ENCODE measurements at regions of chr14 and their contacts with region 1.

Region 1: DNA sequence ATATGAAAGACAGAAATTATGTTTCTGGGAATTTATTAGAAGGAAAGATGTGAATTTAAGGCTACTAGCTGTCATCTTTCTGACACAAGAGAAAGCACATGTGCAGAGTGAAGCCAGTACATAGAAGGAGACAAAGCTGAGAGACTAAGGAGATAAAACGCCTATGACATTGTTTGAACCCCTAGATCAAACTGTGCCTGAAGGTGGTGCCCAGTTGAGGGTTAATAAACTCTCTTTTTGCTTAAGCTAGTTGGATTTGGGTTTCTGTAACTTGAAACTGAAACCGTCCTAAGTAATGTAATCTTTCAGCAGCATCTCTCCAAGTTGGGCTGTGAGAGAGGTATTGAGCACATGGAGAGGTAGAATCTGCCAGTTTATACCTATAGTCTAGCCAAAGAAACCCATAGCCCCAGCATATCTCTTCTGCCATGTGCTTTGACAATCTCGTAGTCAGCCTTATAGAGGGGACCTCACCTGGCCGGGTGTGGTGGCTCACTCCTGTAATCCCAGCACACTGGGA is 84.2 kb downstream of the LRRC74A start:
- DNase-seq: no peak
- ATAC-seq: no peak
- H3K4me3 Mint-ChIP-seq: no peak overlapping the region
- H3K27ac Mint-ChIP-seq: no peak overlapping the region
- H3K4me1 Mint-ChIP-seq: peaks cover 49% of the 10 kb centered on the region
- H3K27me3 Mint-ChIP-seq: no peaks in the 10 kb centered on the region

Region 2: GRCh38 chr14:77059276-77059915 is 149.0 kb after region 1 on chr14:
- CTCF ChIA-PET with region 1: interaction called, 123 read pairs
- DNase-seq: no peak
- ATAC-seq: no peak
- H3K4me3 Mint-ChIP-seq: no peak overlapping the region
- H3K27ac Mint-ChIP-seq: no peak overlapping the region
- H3K4me1 Mint-ChIP-seq: peaks cover 6% of the 10 kb centered on the region
- H3K27me3 Mint-ChIP-seq: no peaks in the 10 kb centered on the region

Region 3: GRCh38 chr14:77301103-77301502 is 390.7 kb after region 1 on chr14:
- CTCF ChIA-PET with region 1: no interaction called
- DNase-seq: peak; percentile 78
- ATAC-seq: no peak
- H3K4me3 Mint-ChIP-seq: no peak overlapping the region
- H3K27ac Mint-ChIP-seq: no peak overlapping the region
- H3K4me1 Mint-ChIP-seq: peaks cover 22% of the 10 kb centered on the region
- H3K27me3 Mint-ChIP-seq: peaks cover 3% of the 10 kb centered on the region

Measured in activated CD8-positive, alpha-beta memory T cell treated with anti-CD3 and anti-CD28 coated beads, Interleukin-2, amount 10 ng/mL, durations not matched to agents 7 days and 5 days (primary cell).